Mammary epithelial cell (primary cell): ENCODE measurements at regions of chr11 and their contacts with region 1.

Region 1: DNA sequence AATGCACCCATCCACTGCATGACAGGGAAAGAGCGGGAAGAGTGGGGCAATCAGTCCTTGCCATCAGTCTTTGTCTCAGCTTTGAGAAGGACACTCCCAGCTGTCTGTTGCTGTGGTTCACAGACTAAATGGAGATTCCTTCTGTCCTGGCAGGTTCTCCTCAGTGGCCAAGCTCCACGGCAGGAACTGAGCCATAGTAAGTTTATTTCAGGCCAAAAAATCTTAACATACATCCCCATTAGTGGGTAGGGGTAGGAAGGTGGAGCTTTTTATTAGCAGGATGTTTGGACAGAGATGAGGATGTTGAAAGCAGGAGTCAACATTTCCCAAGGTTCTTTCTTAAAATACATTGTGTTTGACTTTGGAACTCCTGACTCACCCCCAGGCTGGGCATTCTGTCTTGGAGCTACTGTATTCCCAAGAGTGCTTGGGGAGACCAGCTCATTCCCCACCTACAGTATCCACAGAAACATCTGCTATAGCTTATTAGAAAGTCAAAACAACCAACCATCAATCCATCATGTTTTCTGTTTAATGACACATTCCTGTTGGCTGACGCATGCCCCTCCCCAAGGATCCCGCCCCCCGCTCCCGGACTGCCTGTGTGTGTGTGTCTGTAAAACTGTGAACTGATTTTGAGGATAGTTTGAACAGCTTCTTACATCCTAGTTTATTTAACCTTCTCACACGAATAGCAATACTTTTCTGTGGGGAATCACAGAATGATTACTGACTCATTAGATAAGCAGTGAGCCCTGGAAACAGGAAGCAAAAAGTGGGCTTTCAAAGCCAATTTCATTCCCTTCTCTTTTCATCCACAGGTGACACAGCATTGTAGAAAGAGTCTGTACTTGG is 109.5 kb downstream of the CCDC81 start:
- DNase-seq: peak; percentile 82
- H3K4me3 ChIP-seq: no peak overlapping the region
- H3K27ac ChIP-seq: peak overlapping the region; percentile 12
- H3K4me1 ChIP-seq: peaks cover 25% of the 10 kb centered on the region
- H3K27me3 ChIP-seq: no peaks in the 10 kb centered on the region
- CTCF ChIP-seq: no peak

Region 2: GRCh38 chr11:86456052-86456939 is 27.9 kb before region 1 on chr11:
- CTCF ChIA-PET with region 1: no interaction called
- dilution Hi-C with region 1: no loop called
- in situ Hi-C with region 1: no loop called
- intact Hi-C with region 1: no loop called
- DNase-seq: peak; percentile 64
- H3K4me3 ChIP-seq: no peak overlapping the region
- H3K27ac ChIP-seq: no peak overlapping the region
- H3K4me1 ChIP-seq: peaks cover 32% of the 10 kb centered on the region
- H3K27me3 ChIP-seq: no peaks in the 10 kb centered on the region
- CTCF ChIP-seq: peak; percentile 85 to 90

Region 3: DNA sequence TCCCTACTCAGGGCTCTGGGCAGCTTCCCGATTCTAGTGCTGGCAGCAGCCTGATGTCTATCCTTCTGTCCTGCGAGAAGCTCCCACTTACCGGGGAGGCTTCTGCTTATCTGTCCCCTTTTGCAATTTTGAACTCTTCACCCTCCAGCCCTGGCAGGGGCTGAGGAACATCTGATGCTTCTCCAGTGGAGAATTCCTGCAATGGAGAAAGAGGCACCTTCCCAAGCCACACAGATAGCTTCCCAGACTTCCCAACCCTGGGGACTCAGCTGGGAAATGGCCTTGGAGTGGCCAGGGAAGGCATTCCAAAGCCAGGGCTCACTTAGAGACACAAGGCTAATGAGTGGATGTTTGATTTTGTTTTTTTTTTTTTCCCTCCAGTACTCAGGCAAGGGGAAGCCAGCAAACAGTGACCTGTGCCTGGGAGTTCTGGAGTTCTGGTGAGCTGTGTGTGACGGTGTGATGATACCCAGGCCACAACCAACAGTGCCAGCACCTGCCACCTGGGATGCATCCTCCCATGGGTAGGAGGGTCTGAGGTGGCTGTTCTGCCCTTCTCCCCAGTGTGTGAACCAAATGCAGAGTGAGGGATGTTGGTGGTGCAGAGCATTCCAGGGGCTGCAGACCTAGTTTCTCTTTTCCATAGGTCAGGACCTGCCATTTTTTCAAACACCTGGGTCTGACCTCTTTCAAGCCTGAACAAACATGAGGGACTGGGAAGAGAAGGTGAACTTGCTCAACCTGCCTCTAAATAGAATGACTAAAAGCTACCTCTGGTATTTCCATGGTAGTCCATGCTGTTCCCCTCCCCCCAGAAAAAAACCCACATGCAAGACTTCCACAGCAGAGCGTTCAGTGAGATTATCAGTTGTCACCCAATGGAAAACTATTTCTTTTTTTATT is 14.4 kb before region 1 on chr11:
- CTCF ChIA-PET with region 1: no interaction called
- dilution Hi-C with region 1: no loop called
- in situ Hi-C with region 1: no loop called
- intact Hi-C with region 1: loop called (anchors 1 kb)
- DNase-seq: no peak
- H3K4me3 ChIP-seq: no peak overlapping the region
- H3K27ac ChIP-seq: no peak overlapping the region
- H3K4me1 ChIP-seq: peaks cover 18% of the 10 kb centered on the region
- H3K27me3 ChIP-seq: no peaks in the 10 kb centered on the region
- CTCF ChIP-seq: no peak

Region 4: GRCh38 chr11:86511086-86511551 is 27.0 kb after region 1 on chr11:
- CTCF ChIA-PET with region 1: no interaction called
- dilution Hi-C with region 1: no loop called
- in situ Hi-C with region 1: no loop called
- intact Hi-C with region 1: no loop called
- DNase-seq: peak; percentile 65
- H3K4me3 ChIP-seq: no peak overlapping the region
- H3K27ac ChIP-seq: peak overlapping the region; percentile 6
- H3K4me1 ChIP-seq: peaks cover 38% of the 10 kb centered on the region
- H3K27me3 ChIP-seq: no peaks in the 10 kb centered on the region
- CTCF ChIP-seq: no peak

Region 5: DNA sequence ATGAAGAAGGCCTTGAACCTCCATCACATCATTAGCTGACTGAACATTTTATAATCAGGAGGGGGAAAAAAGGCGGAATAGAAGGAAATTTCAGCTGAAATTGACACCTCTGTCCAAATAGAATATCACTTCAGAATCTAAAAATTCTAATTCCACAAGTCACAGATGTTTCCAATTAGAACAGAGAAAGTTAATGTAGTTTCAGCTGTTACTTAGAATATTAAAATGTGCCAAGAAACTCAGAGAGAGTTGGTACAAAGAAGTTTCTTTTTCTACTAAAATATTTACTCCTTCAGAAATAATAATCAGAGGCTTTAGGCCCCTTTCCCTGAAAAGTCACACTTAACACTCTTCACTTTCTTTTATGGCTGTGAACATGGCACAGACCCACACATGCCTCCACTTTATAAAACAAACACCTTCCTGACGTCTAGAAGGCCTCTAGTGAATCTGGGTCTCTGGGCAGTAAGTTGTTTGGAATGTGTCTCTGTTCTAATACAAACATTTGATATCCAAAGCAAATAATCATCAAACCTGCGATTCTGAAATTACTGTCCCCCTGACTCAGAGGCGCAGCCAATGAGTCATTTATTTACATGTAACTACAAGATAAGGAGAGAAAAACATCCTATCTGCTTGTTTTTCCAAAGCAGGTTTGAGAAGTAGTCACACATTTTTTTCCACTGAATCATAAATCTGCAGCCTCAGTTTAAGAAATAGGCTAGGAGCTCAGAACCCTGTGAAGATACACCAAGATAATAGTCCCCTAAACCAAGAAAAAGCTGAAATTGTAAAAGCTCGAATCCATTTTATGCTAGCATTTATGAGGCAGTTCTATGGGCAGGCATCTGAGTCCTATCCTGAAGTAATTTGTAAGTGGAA is 39.8 kb after region 1 on chr11:
- CTCF ChIA-PET with region 1: no interaction called
- dilution Hi-C with region 1: no loop called
- in situ Hi-C with region 1: no loop called
- intact Hi-C with region 1: loop called (anchors 5 kb)
- DNase-seq: peak; percentile 87
- H3K4me3 ChIP-seq: no peak overlapping the region
- H3K27ac ChIP-seq: peak overlapping the region; percentile 77
- H3K4me1 ChIP-seq: peaks cover 22% of the 10 kb centered on the region
- H3K27me3 ChIP-seq: no peaks in the 10 kb centered on the region
- CTCF ChIP-seq: no peak

Region 6: DNA sequence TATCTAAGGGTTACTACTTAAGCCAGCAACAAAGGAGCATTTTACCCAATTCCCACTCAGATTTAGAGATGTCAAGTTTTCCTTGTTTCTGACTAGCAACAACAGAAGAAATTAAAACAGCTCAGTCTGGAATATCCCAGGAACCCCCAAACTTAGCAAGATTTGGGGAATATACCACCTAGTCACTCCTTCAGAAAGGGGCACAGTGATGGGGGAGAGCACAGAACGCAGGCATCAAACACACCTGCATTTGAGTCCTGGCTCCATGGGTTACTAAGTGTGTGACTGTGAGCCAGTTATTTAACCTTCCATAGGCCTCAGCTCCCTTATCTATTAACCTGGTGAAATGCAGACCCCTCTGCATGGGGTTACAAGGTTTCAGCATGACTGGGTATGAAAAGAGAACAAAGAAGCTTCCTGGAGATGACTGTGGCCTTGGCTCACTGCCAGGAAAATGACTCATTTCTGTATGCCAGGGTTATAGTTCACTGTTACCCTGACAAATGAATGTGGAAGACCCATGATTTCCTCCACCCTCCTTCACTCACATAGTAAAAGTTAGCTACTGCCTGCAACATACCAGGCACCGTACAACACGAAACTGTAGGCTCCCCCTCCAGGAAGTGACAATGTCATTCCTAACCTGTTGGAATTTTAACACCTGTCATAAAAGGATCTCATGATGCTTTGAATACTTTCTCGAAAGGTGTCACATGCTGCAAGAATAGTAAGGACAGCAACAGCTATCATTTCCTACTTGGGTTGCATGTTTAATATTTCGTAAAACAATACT is 108.7 kb after region 1 on chr11:
- CTCF ChIA-PET with region 1: no interaction called
- dilution Hi-C with region 1: loop called (anchors 5 kb)
- in situ Hi-C with region 1: no loop called
- intact Hi-C with region 1: no loop called
- DNase-seq: peak; percentile 81
- H3K4me3 ChIP-seq: no peak overlapping the region
- H3K27ac ChIP-seq: peak overlapping the region; percentile 39
- H3K4me1 ChIP-seq: peaks cover 43% of the 10 kb centered on the region
- H3K27me3 ChIP-seq: no peaks in the 10 kb centered on the region
- CTCF ChIP-seq: no peak